Left cardiac atrium (tissue), 4 donors: ENCODE measurements at regions of chr18 and their contacts with region 1.

Region 1: GRCh38 chr18:13003466-13003896 is 12.3 kb downstream of the CEP192 start:
- DNase-seq: peak; percentile 28
- ATAC-seq: peak; percentile 79 to 81

Region 2: GRCh38 chr18:13103366-13103765 is 99.9 kb after region 1 on chr18:
- intact Hi-C with region 1: loop called in 1 of 2 experiments (anchors 10 kb)
- DNase-seq: no peak
- ATAC-seq: no peak

Region 3: DNA sequence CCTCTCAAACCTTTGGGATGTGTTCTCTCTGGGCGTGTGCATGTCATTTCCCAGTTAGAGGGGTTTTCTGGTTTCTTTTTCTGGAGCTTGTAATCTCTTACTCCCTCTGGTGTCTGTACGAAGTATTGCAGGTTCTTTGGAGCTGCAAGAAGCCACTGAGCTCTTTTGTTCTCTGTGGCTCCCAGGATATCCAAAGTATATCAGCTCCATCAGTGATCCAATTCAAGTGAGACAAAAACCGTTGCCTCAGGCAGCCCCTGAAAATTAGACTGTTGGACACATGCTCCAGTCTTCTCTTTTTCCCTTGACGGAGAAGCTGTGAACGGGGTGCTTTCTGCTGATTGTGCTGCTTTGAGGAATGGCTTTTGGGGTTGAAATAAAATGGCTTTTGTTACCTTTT is 156.1 kb after region 1 on chr18:
- intact Hi-C with region 1: loop called (anchors 10 kb)
- DNase-seq: no peak
- ATAC-seq: peak; percentile 30 to 47